ENCODE measurements at regions of chr2 and their contacts with region 1.

Region 1: DNA sequence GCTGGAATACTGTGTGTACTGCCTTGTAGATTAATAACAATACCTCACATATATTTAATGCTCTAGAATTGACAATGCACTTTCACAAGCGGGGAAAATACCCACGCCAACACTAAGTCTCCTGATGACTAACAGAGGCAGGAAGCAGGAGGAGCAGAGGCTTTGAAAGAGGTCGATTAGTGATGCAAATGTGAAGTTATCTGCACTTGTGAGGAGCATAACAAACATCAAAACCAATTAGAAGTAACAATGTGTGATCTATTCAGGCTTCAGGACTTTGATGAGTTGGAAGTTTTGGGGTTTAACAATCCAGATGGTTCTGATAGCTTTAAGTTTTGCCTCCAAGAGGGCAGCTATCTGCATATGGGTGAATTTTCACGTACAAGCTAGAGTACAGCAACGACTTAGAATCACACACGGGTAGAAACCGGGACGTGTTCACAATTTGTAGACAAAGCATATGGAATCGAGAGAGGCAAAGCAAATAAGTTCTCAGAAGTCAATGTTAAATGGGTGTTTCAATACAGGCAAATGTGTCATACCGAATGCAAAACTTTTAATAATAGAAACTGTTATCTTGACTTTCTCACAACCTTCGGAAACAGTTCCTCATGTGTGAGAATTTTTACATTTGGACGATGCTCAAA is 114.5 kb downstream of the METTL8 start:
- DNase-seq: peak in 8 of 9 donors; percentile 16 to 60 (median 40)
- ATAC-seq: peak; percentile 91
- H3K4me3 ChIP-seq: no peak overlapping the region
- H3K4me3 Mint-ChIP-seq: peak overlapping the region; percentile 38 to 79 (median 69)
- H3K27ac ChIP-seq: no peak overlapping the region
- H3K27ac Mint-ChIP-seq: peak overlapping the region; percentile 19 to 87 (median 63)
- H3K4me1 ChIP-seq: peaks cover 0 to 4% of the 10 kb centered on the region in 2 donors
- H3K4me1 Mint-ChIP-seq: peaks cover 12 to 52% (median 38%) of the 10 kb centered on the region in 7 donors
- H3K27me3 ChIP-seq: no peaks in the 10 kb centered on the region
- H3K27me3 Mint-ChIP-seq: no peaks in the 10 kb centered on the region

Region 2: DNA sequence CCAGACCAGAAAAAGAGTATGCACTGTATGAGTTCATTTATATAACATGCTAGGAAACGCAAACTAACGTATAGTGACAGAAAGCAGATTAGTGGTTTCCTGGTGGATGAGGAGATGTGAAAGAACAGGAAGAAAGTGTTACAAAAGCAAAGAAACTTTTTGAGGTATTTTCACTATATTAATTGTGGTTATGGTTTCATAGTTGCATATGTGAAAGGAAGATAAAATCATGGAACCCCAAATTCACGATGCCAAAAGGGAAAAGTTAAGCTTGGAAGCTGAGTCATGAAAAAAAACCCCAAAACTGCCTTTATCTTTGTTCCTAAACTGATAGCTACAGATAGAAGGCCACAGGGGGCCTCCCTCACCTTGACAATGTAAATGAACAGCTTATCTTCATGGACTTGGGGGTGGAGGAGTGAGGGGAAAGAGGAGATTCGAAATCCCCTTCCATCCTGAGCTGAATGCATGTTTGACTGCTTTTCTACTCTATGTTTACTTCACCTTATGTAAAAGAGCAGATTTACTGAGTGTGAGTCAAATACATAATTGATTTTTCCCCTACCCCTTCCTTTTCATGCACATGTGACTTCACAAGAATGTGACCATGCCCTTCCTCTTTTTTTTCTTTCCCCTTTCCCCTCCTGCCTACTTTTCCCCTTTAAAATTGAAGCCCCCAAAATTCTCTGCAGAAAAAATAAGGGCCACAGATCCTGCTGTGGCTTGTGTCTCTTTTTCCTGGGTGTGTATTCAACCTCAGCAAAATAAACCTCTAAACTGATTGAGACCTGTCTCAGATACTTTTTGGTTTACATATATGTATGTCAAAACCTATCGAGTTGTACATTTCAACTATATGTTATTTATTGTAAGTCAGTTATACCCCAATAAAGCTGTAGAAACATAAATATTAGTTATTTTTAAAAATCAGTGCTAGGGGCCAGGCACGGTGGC is 58.5 kb before region 1 on chr2:
- CTCF ChIA-PET with region 1: no interaction called
- POLR2A ChIA-PET with region 1: no interaction called
- intact Hi-C with region 1: loop called in 1 of 2 experiments (anchors 5 kb)
- DNase-seq: peak in 1 of 9 donors; percentile 31
- ATAC-seq: peak; percentile 41
- H3K4me3 ChIP-seq: no peak overlapping the region
- H3K4me3 Mint-ChIP-seq: peak overlapping the region in 4 of 10 donors; percentile 1 to 36 (median 19)
- H3K27ac ChIP-seq: no peak overlapping the region
- H3K27ac Mint-ChIP-seq: peak overlapping the region in 8 of 9 donors; percentile 3 to 83 (median 37)
- H3K4me1 ChIP-seq: peaks cover 0 to 11% of the 10 kb centered on the region in 2 donors
- H3K4me1 Mint-ChIP-seq: peaks cover 6 to 21% (median 15%) of the 10 kb centered on the region in 7 donors
- H3K27me3 ChIP-seq: no peaks in the 10 kb centered on the region
- H3K27me3 Mint-ChIP-seq: peaks cover 0 to 3% (median 0%) of the 10 kb centered on the region in 5 donors

Region 3: GRCh38 chr2:171307560-171307959 is 11.7 kb before region 1 on chr2:
- CTCF ChIA-PET with region 1: no interaction called
- POLR2A ChIA-PET with region 1: no interaction called
- intact Hi-C with region 1: no loop called
- DNase-seq: no peak
- ATAC-seq: no peak
- H3K4me3 ChIP-seq: no peak overlapping the region
- H3K4me3 Mint-ChIP-seq: no peak overlapping the region
- H3K27ac ChIP-seq: no peak overlapping the region
- H3K27ac Mint-ChIP-seq: no peak overlapping the region
- H3K4me1 ChIP-seq: no peaks in the 10 kb centered on the region
- H3K4me1 Mint-ChIP-seq: no peaks in the 10 kb centered on the region
- H3K27me3 ChIP-seq: no peaks in the 10 kb centered on the region
- H3K27me3 Mint-ChIP-seq: no peaks in the 10 kb centered on the region

Region 4: DNA sequence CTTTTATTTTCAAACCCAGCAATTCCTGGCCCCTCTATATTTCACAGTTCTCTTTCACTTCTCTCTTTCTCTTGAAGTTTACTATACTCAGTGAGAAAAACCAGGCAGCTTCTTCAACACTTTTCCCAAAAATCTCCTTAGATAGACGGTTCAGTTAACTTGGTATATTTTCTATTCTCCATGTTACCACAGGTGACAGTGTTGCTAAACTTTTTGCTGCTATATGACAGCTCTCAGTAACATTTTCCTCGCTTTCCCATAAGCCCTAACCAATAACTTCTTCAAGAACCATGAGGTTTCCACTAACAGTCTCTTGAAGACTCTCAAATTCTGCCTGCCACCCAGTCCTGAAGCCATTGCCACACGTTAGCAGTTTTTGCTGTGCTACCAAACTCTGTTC is 248.8 kb after region 1 on chr2:
- CTCF ChIA-PET with region 1: no interaction called
- POLR2A ChIA-PET with region 1: no interaction called
- intact Hi-C with region 1: no loop called
- DNase-seq: no peak
- ATAC-seq: no peak
- H3K4me3 ChIP-seq: no peak overlapping the region
- H3K4me3 Mint-ChIP-seq: no peak overlapping the region
- H3K27ac ChIP-seq: no peak overlapping the region
- H3K27ac Mint-ChIP-seq: no peak overlapping the region
- H3K4me1 ChIP-seq: no peaks in the 10 kb centered on the region
- H3K4me1 Mint-ChIP-seq: no peaks in the 10 kb centered on the region
- H3K27me3 ChIP-seq: no peaks in the 10 kb centered on the region
- H3K27me3 Mint-ChIP-seq: peaks cover 0 to 19% (median 4%) of the 10 kb centered on the region in 5 donors

Region 5: DNA sequence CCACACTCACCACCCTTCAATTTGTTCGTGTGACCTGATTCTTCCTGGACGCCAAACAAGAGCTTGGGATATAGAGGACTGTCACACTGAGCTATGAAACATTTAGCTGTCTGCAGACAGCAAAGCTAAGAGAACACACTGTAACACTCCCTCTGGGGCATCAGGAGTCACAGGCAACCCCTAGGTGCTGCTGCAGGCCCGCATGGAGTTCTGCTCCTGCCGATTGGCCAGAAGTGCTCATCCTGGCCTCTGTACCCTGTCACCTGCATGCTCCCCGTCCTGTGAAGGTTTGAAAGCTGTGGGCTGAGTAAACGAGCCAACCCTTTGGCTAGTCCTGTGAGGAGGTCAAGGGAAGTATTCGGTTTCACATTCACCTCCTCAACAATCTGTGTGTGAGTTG is 1310.3 kb after region 1 on chr2:
- CTCF ChIA-PET with region 1: no interaction called
- POLR2A ChIA-PET with region 1: no interaction called
- intact Hi-C with region 1: no loop called
- DNase-seq: no peak
- ATAC-seq: no peak
- H3K4me3 ChIP-seq: no peak overlapping the region
- H3K4me3 Mint-ChIP-seq: no peak overlapping the region
- H3K27ac ChIP-seq: no peak overlapping the region
- H3K27ac Mint-ChIP-seq: no peak overlapping the region
- H3K4me1 ChIP-seq: no peaks in the 10 kb centered on the region
- H3K4me1 Mint-ChIP-seq: no peaks in the 10 kb centered on the region
- H3K27me3 ChIP-seq: no peaks in the 10 kb centered on the region
- H3K27me3 Mint-ChIP-seq: no peaks in the 10 kb centered on the region